ENCODE measurements at regions of chr3 and their contacts with region 1.

Region 1: DNA sequence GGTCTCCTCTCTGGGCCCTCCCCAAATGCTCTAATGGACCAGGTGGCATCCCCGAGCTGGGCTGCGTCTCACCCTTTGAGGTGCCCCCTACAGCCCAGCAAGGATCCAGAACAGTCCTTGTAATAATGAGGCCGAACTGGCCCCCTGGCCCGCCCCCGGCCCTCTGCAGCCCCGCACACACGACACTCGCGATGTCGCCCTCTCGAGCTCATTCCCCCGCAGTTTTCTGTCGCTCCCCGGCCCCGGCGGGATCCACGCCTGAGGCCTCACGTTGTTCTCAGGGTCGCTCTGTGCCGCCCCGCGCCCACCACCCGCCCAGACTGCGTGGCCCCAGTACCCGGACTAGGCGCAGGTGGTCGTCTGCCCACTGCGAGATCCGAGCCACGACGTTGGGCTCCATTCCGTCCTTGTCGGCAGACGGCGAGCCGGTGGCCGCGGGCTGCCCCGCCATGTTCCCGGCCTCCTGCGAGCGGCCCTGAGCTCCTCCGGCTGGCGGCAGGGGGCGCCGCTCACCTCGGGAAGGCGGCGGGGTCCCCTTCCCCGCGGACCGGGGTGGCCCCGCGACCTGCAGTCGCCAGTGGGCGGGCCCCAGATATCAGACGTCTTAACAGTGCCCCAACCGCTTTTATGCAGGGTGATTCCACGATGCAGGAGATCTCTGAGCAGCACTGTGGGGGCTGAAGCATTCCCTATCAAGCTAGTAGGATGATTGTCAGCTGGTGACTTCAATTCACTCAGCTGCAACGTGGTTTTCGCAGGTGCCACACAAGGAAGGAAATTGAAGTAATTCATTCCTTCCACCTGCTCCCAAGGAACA is at the start of gene C3orf33:
- DNase-seq: peak; percentile 93
- H3K4me3 Mint-ChIP-seq: peak within 1 kb of the TSS; percentile 93
- H3K27ac Mint-ChIP-seq: peak within 1 kb of the TSS; percentile 78
- H3K4me1 Mint-ChIP-seq: peaks cover 14% of the 10 kb centered on the region
- H3K27me3 Mint-ChIP-seq: peaks cover 7% of the 10 kb centered on the region
- CTCF ChIP-seq: peak; percentile 99
- total RNA-seq, gene C3orf33: 6.6 and 9.5 TPM in 2 replicates

Region 2: GRCh38 chr3:155737844-155738460 is 68.1 kb before region 1 on chr3:
- CTCF ChIA-PET with region 1: interaction called, 10 read pairs
- intact Hi-C with region 1: no loop called
- DNase-seq: peak; percentile 88
- H3K4me3 Mint-ChIP-seq: peak overlapping the region; percentile 88
- H3K27ac Mint-ChIP-seq: peak overlapping the region; percentile 98
- H3K4me1 Mint-ChIP-seq: peaks cover 39% of the 10 kb centered on the region
- H3K27me3 Mint-ChIP-seq: no peaks in the 10 kb centered on the region
- CTCF ChIP-seq: no peak

Region 3: DNA sequence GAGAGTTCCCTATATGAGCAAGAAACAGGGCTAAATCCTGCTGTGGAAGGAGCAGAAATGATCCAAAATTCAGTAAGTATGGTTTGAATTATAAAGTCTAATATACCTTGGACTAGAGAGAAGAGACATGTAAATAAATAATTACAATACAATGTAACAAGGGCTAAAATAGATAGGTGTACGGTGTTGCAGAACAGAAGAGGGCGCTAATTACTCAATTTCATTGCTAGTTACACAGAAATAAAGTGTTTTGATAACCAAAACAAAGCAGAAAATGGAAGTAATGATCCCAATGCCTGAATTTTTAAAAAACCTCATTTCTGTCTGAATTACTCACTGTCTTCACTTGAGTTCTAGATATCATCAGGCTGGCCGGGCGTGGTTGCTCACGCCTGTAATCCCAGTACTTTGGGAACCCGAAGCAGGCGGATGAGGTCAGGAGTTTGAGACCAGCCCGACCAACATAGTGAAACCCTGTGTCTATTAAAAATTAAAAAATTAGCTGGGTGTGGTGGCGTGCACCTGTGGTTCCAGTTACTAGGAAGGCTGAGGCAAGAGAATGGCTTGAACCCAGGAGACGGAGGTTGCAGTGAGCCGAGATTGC is 52.9 kb before region 1 on chr3:
- CTCF ChIA-PET with region 1: interaction called, 8 read pairs
- intact Hi-C with region 1: loop called (anchors 2 kb)
- DNase-seq: no peak
- H3K4me3 Mint-ChIP-seq: no peak overlapping the region
- H3K27ac Mint-ChIP-seq: no peak overlapping the region
- H3K4me1 Mint-ChIP-seq: peaks cover 14% of the 10 kb centered on the region
- H3K27me3 Mint-ChIP-seq: no peaks in the 10 kb centered on the region
- CTCF ChIP-seq: peak; percentile 61

Region 4: GRCh38 chr3:155778462-155778861 is 27.5 kb before region 1 on chr3:
- CTCF ChIA-PET with region 1: no interaction called
- intact Hi-C with region 1: no loop called
- DNase-seq: no peak
- H3K4me3 Mint-ChIP-seq: no peak overlapping the region
- H3K27ac Mint-ChIP-seq: no peak overlapping the region
- H3K4me1 Mint-ChIP-seq: no peaks in the 10 kb centered on the region
- H3K27me3 Mint-ChIP-seq: no peaks in the 10 kb centered on the region
- CTCF ChIP-seq: no peak

Region 5: GRCh38 chr3:155791190-155791589 is 14.8 kb before region 1 on chr3:
- CTCF ChIA-PET with region 1: interaction called, 8 read pairs
- intact Hi-C with region 1: loop called (anchors 1 kb)
- DNase-seq: no peak
- H3K4me3 Mint-ChIP-seq: no peak overlapping the region
- H3K27ac Mint-ChIP-seq: no peak overlapping the region
- H3K4me1 Mint-ChIP-seq: peaks cover 12% of the 10 kb centered on the region
- H3K27me3 Mint-ChIP-seq: no peaks in the 10 kb centered on the region
- CTCF ChIP-seq: no peak

Region 6: DNA sequence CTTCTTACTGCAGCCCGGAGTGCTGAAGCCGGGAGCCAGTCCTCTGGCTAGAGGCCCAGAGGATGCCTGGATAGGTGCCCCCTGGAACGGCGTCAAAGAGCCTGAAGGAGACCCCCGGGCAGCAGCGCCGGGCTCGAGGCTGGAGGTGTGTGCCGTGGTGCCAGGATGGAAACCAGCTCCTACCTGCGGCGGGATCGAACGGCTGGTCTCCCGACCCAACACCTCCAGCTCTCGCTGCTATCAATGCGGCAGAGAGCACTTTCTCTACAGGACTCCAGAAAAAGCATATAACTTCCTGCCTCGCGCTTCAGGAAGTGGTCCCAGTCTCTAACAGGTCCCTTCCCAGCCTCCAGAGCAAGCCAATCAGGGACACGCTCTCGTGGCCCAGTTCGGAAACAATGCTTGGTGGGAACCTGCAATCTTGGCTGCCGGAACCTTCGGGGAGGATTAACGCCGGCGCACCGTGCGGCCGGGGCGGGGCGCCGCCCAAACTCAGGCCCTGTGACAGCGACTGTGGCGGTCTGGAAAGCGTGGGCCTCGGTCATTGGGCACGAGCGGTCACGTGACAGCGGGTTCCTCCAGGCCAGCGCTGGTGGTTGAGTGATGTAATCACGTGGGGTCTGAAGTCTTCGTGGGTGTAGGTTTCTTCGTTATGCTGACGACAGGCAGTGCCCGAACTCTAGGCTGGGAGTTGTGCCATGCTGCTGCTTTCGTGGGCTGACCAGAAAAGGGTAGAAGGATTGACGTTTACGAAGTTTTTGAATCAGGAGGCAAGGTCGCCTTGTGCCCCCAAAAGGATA is 48.3 kb after region 1 on chr3 and contains the start of gene SLC33A1:
- CTCF ChIA-PET with region 1: interaction called, 23 read pairs
- intact Hi-C with region 1: loop called (anchors 2 kb)
- DNase-seq: peak; percentile 100
- H3K4me3 Mint-ChIP-seq: peak within 1 kb of the TSS; percentile 99
- H3K27ac Mint-ChIP-seq: peak within 1 kb of the TSS; percentile 99
- H3K4me1 Mint-ChIP-seq: peaks cover 16% of the 10 kb centered on the region
- H3K27me3 Mint-ChIP-seq: no peaks in the 10 kb centered on the region
- CTCF ChIP-seq: no peak
- total RNA-seq, gene SLC33A1: 61.6 and 72.0 TPM in 2 replicates

Region 7: GRCh38 chr3:155870133-155870944 is 64.3 kb after region 1 on chr3 and contains the start of gene GMPS:
- CTCF ChIA-PET with region 1: interaction called, 16 read pairs
- intact Hi-C with region 1: no loop called
- DNase-seq: peak; percentile 100
- H3K4me3 Mint-ChIP-seq: peak within 1 kb of the TSS; percentile 97
- H3K27ac Mint-ChIP-seq: peak within 1 kb of the TSS; percentile 86
- H3K4me1 Mint-ChIP-seq: peaks cover 37% of the 10 kb centered on the region
- H3K27me3 Mint-ChIP-seq: no peaks in the 10 kb centered on the region
- CTCF ChIP-seq: peak; percentile 21
- total RNA-seq, gene GMPS: 171 and 194 TPM in 2 replicates

Measured in Calu3 (cell line).